HEK293 (cell line): ENCODE measurements at regions of chr1 and their contacts with region 1.

Region 1: GRCh38 chr1:244214009-244214967 is 163.2 kb downstream of the ZBTB18 start:
- H3K4me3 ChIP-seq: no peak overlapping the region
- H3K27ac ChIP-seq: peak overlapping the region; percentile 24
- H3K4me1 ChIP-seq: peaks cover 7% of the 10 kb centered on the region
- CTCF ChIP-seq: no peak

Region 2: DNA sequence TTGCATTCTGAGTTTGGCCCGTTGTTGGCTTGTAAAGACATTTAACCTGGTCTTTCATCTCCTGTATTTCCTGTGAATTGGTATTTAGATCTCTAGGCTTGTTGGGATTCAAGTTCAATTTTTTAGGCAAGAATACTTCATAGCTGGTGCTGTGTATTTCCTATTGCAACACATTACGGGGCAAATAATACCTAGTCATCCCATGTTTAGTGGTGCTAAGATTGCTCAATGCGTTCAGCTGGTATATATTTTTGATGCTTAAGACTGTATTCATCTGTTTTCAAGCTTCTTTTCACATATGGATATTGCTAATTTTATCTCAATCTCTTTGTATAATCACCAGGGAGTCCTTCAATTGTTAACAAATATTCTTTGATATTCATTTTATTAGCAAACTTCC is 250.7 kb before region 1 on chr1:
- CTCF ChIA-PET with region 1: no interaction called
- POLR2A ChIA-PET with region 1: no interaction called
- H3K4me3 ChIP-seq: no peak overlapping the region
- H3K27ac ChIP-seq: no peak overlapping the region
- H3K4me1 ChIP-seq: no peaks in the 10 kb centered on the region
- CTCF ChIP-seq: no peak

Region 3: DNA sequence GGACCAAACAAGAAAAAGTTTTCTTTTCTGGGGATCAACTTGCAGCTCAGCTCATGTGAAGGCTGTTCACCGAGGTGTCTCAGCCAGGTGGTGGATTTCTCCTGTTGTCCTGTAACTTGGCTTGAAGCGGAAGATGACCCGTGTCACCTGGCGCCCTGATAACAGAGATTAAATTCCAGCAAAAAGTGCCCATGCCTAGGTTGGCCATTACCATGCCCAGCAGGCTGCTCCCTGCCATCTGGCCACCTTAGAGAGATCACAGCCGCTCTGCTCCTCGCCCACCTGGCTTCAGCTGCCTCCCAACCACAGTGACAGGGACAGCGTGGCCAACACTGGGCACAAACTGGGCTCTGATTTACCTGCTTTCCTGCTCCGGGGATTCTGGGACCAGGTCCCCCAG is 13.7 kb before region 1 on chr1:
- CTCF ChIA-PET with region 1: interaction called, 10 read pairs
- POLR2A ChIA-PET with region 1: no interaction called
- H3K4me3 ChIP-seq: no peak overlapping the region
- H3K27ac ChIP-seq: no peak overlapping the region
- H3K4me1 ChIP-seq: no peaks in the 10 kb centered on the region
- CTCF ChIP-seq: no peak